ENCODE measurements at regions of chr6 and their contacts with region 1.

Region 1: GRCh38 chr6:158605266-158605878 is 39.2 kb downstream of the DYNLT1 start:
- DNase-seq: peak; percentile 69 to 75
- H3K4me3 ChIP-seq: no peak overlapping the region
- H3K4me3 Mint-ChIP-seq: no peak overlapping the region
- H3K27ac Mint-ChIP-seq: peak overlapping the region; percentile 45
- H3K4me1 ChIP-seq: peaks cover 6% of the 10 kb centered on the region
- H3K4me1 Mint-ChIP-seq: peaks cover 17% of the 10 kb centered on the region
- H3K27me3 ChIP-seq: no peaks in the 10 kb centered on the region
- H3K27me3 Mint-ChIP-seq: no peaks in the 10 kb centered on the region
- CTCF ChIP-seq: peak; percentile 53 to 69

Region 2: GRCh38 chr6:158077676-158078075 is 527.7 kb before region 1 on chr6:
- CTCF ChIA-PET with region 1: no interaction called
- POLR2A ChIA-PET with region 1: interaction called, 12 read pairs
- intact Hi-C with region 1: no loop called
- DNase-seq: no peak
- H3K4me3 ChIP-seq: no peak overlapping the region
- H3K4me3 Mint-ChIP-seq: no peak overlapping the region
- H3K27ac Mint-ChIP-seq: no peak overlapping the region
- H3K4me1 ChIP-seq: no peaks in the 10 kb centered on the region
- H3K4me1 Mint-ChIP-seq: no peaks in the 10 kb centered on the region
- H3K27me3 ChIP-seq: no peaks in the 10 kb centered on the region
- H3K27me3 Mint-ChIP-seq: no peaks in the 10 kb centered on the region
- CTCF ChIP-seq: no peak

Region 3: GRCh38 chr6:158536084-158536890 is 69.1 kb before region 1 on chr6:
- CTCF ChIA-PET with region 1: no interaction called
- POLR2A ChIA-PET with region 1: no interaction called
- intact Hi-C with region 1: loop called (anchors 2 kb)
- DNase-seq: peak; percentile 85 to 90
- H3K4me3 ChIP-seq: peak overlapping the region; percentile 88
- H3K4me3 Mint-ChIP-seq: peak overlapping the region; percentile 67
- H3K27ac Mint-ChIP-seq: no peak overlapping the region
- H3K4me1 ChIP-seq: no peaks in the 10 kb centered on the region
- H3K4me1 Mint-ChIP-seq: no peaks in the 10 kb centered on the region
- H3K27me3 ChIP-seq: no peaks in the 10 kb centered on the region
- H3K27me3 Mint-ChIP-seq: peaks cover 6% of the 10 kb centered on the region
- CTCF ChIP-seq: no peak